ENCODE measurements at regions of chr9 and their contacts with region 1.

Region 1: DNA sequence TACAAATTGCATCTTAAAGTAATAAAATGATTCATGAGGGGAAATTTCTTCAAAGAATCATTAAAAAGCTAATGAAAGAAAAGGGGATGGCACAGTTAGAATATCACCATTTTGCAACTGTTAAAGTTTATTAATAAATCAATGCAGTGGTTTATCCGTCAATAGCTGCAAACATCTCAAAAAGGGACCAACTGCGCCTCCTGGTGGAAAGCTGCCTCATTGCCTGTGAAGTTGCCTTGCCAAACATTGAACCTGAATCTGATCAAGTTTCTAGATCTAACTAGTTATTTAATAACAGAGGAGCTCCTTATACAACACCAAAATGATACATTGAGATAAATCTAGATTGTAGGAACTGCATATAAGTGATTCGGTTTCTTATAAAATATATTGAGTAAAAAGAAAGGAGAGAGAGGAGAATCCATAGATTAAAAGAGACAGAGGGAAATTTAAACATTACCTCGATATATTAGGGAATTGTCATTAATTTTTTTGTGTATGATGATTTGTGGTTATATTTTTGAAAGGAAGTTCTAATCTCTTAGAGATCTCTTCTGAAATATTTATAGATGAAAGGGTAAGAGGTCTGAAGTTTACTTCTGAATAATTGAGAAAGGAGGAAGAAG is 6.9 kb upstream of the NDUFB6 start:
- DNase-seq: peak; percentile 82 to 83
- H3K4me3 ChIP-seq: no peak overlapping the region
- H3K27ac ChIP-seq: no peak overlapping the region
- H3K4me1 ChIP-seq: peaks cover 0 to 8% (median 3%) of the 10 kb centered on the region in 4 donors
- H3K27me3 ChIP-seq: peaks cover 0 to 9% (median 0%) of the 10 kb centered on the region in 3 donors
- CTCF ChIP-seq: peak in 5 of 7 experiments; percentile 57 to 90 (median 86)
- EP300 ChIP-seq: no peak
- POLR2A ChIP-seq: no peak

Region 2: GRCh38 chr9:32378993-32379729 is 200.7 kb before region 1 on chr9:
- intact Hi-C with region 1: loop called (anchors 5 kb)
- DNase-seq: peak in 1 of 2 donors; percentile 92
- H3K4me3 ChIP-seq: no peak overlapping the region
- H3K27ac ChIP-seq: no peak overlapping the region
- H3K4me1 ChIP-seq: peaks cover 0 to 19% (median 12%) of the 10 kb centered on the region in 4 donors
- H3K27me3 ChIP-seq: no peaks in the 10 kb centered on the region
- CTCF ChIP-seq: peak in 5 of 7 experiments; percentile 42 to 89 (median 75)
- EP300 ChIP-seq: no peak
- POLR2A ChIP-seq: no peak

Region 3: GRCh38 chr9:32968101-32969011 is 388.5 kb after region 1 on chr9:
- intact Hi-C with region 1: loop called (anchors 5 kb)
- DNase-seq: peak; percentile 53 to 74
- H3K4me3 ChIP-seq: no peak overlapping the region
- H3K27ac ChIP-seq: no peak overlapping the region
- H3K4me1 ChIP-seq: peaks cover 0 to 7% (median 0%) of the 10 kb centered on the region in 4 donors
- H3K27me3 ChIP-seq: no peaks in the 10 kb centered on the region
- CTCF ChIP-seq: peak in 5 of 7 experiments; percentile 31 to 88 (median 72)
- EP300 ChIP-seq: no peak
- POLR2A ChIP-seq: no peak